K562 (cell line): ENCODE measurements at regions of chr12 and their contacts with region 1.

Region 1: GRCh38 chr12:48890657-48891418 is 25.2 kb upstream of the RND1 start:
- DNase-seq: peak; percentile 71 to 84 (median 76)
- ATAC-seq: peak; percentile 99
- H3K4me3 ChIP-seq: no peak overlapping the region
- H3K27ac ChIP-seq: no peak overlapping the region
- H3K4me1 ChIP-seq: peaks cover 5 to 6% of the 10 kb centered on the region in 2 experiments; a peak in 4 of 5 replicates
- H3K27me3 ChIP-seq: peaks cover 7 to 8% of the 10 kb centered on the region in 2 experiments; a peak in 3 of 5 replicates
- CTCF ChIP-seq: peak; percentile 92 to 94 (median 94)
- EP300 ChIP-seq: no peak
- POLR2A ChIP-seq: no peak
- RAD21 ChIP-seq: peak; percentile 93 to 95

Region 2: DNA sequence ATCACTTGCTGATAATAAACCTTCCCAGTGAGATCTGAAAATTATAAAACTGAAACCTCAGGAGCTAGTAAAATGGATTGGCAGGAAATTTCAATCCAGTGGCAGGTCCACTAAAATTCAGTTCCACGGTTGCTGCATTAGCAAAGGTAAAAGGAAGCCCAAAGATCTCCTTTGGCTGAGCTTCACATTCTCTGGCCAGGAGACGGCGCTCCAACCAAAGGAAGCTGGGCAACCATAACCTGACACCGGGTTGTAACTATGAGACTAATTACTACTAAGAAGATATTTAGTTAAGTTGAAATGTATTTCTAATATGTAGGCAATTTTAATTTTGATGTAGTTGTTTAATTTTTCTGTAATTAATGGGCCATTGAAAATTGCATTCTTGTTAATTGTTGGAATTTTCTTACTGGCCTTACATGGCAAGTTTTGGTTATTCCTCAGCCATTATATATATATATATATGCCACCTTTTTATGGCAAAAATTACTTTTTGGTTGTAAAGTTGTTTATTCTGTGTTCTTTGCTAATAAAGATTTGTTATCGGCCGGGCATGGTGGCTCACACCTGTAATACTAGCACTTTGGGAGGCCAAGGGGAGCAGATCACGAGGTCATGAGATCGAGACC is 348.4 kb before region 1 on chr12:
- CTCF ChIA-PET with region 1: no interaction called
- POLR2A ChIA-PET with region 1: no interaction called
- in situ Hi-C with region 1: no loop called
- intact Hi-C with region 1: no loop called
- DNase-seq: peak; percentile 50 to 74 (median 54)
- ATAC-seq: peak; percentile 90
- H3K4me3 ChIP-seq: no peak overlapping the region
- H3K27ac ChIP-seq: no peak overlapping the region
- H3K4me1 ChIP-seq: peaks cover 0 to 4% of the 10 kb centered on the region in 2 experiments; a peak in 2 of 5 replicates
- H3K27me3 ChIP-seq: no peaks in the 10 kb centered on the region
- CTCF ChIP-seq: peak; percentile 88 to 96 (median 93)
- EP300 ChIP-seq: no peak
- POLR2A ChIP-seq: no peak
- RAD21 ChIP-seq: peak; percentile 99

Region 3: DNA sequence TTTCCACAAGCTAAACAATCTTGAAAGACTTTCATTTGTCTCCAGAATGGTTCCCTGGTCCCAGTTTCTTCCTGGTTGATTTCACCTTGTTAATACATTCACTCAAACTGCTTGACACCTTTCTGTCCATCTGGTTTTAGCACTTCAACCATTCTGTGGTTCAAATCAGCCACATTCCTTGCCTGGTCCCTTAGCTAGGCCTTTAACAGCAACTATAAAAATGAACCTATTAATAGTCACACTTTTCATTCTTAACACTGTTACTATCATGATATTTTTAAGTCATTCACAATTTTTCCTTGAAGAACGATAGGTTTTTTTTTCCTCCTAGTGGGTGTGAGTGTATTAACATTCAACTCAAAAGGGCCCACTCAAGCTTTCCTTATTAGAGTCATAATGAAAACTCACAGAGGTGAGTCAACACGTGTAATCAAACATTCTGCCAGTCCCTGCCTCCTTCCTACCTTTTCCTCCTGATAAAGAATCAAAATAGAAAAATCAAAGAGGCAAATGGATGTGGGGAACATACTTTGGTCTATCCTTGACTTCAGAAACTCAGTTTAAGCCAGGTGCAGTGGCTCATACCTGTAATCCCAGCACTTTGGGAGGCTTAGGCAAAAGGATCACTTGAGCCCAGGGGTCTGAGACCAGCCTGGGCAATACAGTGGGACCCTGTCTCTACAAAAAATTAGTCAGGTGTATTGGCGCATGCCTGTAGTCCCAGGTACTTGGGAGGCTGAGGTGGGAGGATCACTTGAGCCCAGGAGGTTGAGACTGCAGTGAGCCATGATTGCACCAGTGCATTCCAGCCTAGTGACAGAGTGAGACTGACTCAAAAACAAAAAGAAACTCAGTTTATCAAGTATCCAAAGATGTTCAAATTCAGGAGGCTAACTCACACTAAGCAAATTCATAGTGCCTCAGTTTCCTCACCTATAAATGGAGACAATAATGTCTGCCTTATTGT is 139.8 kb before region 1 on chr12:
- CTCF ChIA-PET with region 1: interaction called, 3 read pairs
- POLR2A ChIA-PET with region 1: no interaction called
- in situ Hi-C with region 1: no loop called
- intact Hi-C with region 1: loop called (anchors 5 kb)
- DNase-seq: no peak
- ATAC-seq: no peak
- H3K4me3 ChIP-seq: no peak overlapping the region
- H3K27ac ChIP-seq: no peak overlapping the region
- H3K4me1 ChIP-seq: no peaks in the 10 kb centered on the region; a peak in 1 of 5 replicates
- H3K27me3 ChIP-seq: no peaks in the 10 kb centered on the region; a peak in 2 of 5 replicates
- CTCF ChIP-seq: no peak
- EP300 ChIP-seq: no peak
- POLR2A ChIP-seq: no peak
- RAD21 ChIP-seq: no peak

Region 4: GRCh38 chr12:48814262-48815125 is 76.3 kb before region 1 on chr12:
- CTCF ChIA-PET with region 1: interaction called, 3 read pairs
- POLR2A ChIA-PET with region 1: no interaction called
- in situ Hi-C with region 1: no loop called
- intact Hi-C with region 1: loop called (anchors 2 kb)
- DNase-seq: peak; percentile 90 to 96 (median 94)
- ATAC-seq: peak; percentile 92
- H3K4me3 ChIP-seq: peak overlapping the region; percentile 65
- H3K27ac ChIP-seq: peak overlapping the region; percentile 61
- H3K4me1 ChIP-seq: peaks cover 4 to 38% of the 10 kb centered on the region in 2 experiments; a peak in 3 of 5 replicates
- H3K27me3 ChIP-seq: peaks cover 0 to 15% of the 10 kb centered on the region in 2 experiments; a peak in 2 of 5 replicates
- CTCF ChIP-seq: peak; percentile 99 to 100 (median 100)
- EP300 ChIP-seq: no peak
- POLR2A ChIP-seq: peak; percentile 80
- RAD21 ChIP-seq: peak; percentile 50 to 68

Region 5: GRCh38 chr12:48865434-48866290 is 25.2 kb before region 1 on chr12 and contains the start of gene RND1:
- CTCF ChIA-PET with region 1: no interaction called
- POLR2A ChIA-PET with region 1: interaction called, 23 read pairs
- in situ Hi-C with region 1: no loop called
- intact Hi-C with region 1: no loop called
- DNase-seq: peak; percentile 92 to 95 (median 94)
- ATAC-seq: peak; percentile 98
- H3K4me3 ChIP-seq: peak within 1 kb of the TSS; percentile 39
- H3K27ac ChIP-seq: peak within 1 kb of the TSS; percentile 37; the same call in 2 of the 3 replicates
- H3K4me1 ChIP-seq: peaks cover 7 to 8% of the 10 kb centered on the region in 2 experiments; a peak in 3 of 5 replicates
- H3K27me3 ChIP-seq: peaks cover 27 to 33% of the 10 kb centered on the region in 2 experiments
- CTCF ChIP-seq: peak in 1 of 3 experiments; percentile 19; a peak in 1 of 6 replicates
- EP300 ChIP-seq: no peak
- POLR2A ChIP-seq: peak; percentile 79
- RAD21 ChIP-seq: no peak
- polyA plus RNA-seq, gene RND1: not detected

Region 6: DNA sequence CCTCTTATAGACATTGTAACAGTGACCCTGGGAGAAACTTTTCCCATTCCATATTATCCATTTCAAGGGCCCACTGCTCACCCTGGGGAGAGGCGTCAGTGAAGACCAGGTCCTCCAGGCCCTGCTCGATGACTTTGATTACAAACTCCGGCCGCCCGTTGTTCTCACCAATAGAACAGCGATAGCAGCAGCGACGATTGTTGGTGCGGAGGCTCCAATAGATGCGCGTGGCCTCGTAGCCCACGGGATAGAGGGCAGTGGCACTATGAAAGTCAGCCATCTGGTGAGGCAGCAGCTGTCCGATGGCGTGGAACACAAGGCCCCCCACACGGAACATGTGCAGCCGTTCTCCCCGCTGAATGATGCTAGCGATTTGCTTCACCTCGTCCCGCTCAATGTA is 135.3 kb after region 1 on chr12:
- CTCF ChIA-PET with region 1: no interaction called
- POLR2A ChIA-PET with region 1: no interaction called
- in situ Hi-C with region 1: no loop called
- intact Hi-C with region 1: no loop called
- DNase-seq: no peak
- ATAC-seq: no peak
- H3K4me3 ChIP-seq: no peak overlapping the region
- H3K27ac ChIP-seq: no peak overlapping the region
- H3K4me1 ChIP-seq: peaks cover 0 to 5% of the 10 kb centered on the region in 2 experiments; a peak in 1 of 5 replicates
- H3K27me3 ChIP-seq: no peaks in the 10 kb centered on the region
- CTCF ChIP-seq: no peak
- EP300 ChIP-seq: no peak
- POLR2A ChIP-seq: no peak
- RAD21 ChIP-seq: no peak